Mammary epithelial cell (primary cell): ENCODE measurements at regions of chr5 and their contacts with region 1.

Region 1: GRCh38 chr5:82351754-82352145 is 73.6 kb upstream of the RPS23 start:
- DNase-seq: peak; percentile 69
- H3K4me3 ChIP-seq: no peak overlapping the region
- H3K27ac ChIP-seq: no peak overlapping the region
- H3K4me1 ChIP-seq: peaks cover 3% of the 10 kb centered on the region
- H3K27me3 ChIP-seq: no peaks in the 10 kb centered on the region
- CTCF ChIP-seq: peak; percentile 64 to 70

Region 2: DNA sequence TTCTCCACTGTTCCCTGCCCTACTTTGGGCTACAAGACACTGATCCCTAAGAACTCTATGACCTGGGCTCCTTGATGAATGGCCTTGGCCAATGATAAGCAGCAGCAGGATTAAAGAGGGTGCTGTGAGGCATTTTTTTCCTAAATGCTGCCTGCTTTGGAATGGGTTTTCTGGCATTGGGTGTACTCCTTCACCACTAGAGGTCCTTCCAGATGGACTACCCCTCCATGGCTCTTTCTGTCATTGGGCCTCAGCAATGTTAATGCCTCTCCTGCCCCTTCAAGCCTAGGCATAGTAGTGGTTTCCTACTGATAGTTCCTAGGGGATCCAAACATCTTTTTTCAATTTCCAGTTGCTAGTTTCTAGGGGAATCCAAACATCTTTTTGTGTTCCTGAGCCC is 245.7 kb after region 1 on chr5:
- CTCF ChIA-PET with region 1: no interaction called
- dilution Hi-C with region 1: no loop called
- in situ Hi-C with region 1: no loop called
- intact Hi-C with region 1: no loop called
- DNase-seq: no peak
- H3K4me3 ChIP-seq: no peak overlapping the region
- H3K27ac ChIP-seq: no peak overlapping the region
- H3K4me1 ChIP-seq: no peaks in the 10 kb centered on the region
- H3K27me3 ChIP-seq: no peaks in the 10 kb centered on the region
- CTCF ChIP-seq: peak; percentile 18 to 37

Region 3: DNA sequence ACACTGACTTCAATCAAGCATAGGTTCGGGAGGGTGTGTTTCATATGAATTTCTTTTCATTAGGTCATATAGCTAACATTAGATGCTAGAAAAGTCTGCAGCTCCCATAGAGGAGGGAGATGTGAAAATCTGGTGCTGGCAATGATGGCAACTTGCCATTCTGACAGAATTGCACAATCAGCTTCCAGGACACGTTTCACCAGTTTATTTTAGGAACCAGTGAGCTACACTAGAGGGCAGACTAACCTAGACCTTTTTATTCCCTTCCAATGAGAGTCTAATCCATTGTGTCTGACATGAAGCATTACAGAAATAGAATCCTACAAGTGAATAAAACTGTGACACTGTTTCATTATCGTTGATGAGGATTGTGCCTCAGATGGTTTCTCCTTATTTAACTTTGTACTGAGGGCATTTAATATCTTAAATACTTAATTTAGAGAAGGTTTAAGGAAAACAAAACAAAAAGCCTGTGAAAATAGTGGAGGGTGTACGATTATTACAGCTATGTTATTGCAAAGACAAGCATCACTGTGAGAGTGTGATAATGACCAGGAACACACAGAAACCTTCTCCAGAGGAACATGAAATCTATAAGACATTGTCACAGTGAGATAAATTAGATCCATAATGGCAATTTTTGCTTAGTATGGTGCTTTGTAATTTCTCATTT is 289.7 kb after region 1 on chr5:
- CTCF ChIA-PET with region 1: no interaction called
- dilution Hi-C with region 1: no loop called
- in situ Hi-C with region 1: loop called (anchors 10 to 25 kb)
- intact Hi-C with region 1: loop called (anchors 1 kb)
- DNase-seq: peak; percentile 76
- H3K4me3 ChIP-seq: no peak overlapping the region
- H3K27ac ChIP-seq: no peak overlapping the region
- H3K4me1 ChIP-seq: peaks cover under 1% of the 10 kb centered on the region
- H3K27me3 ChIP-seq: no peaks in the 10 kb centered on the region
- CTCF ChIP-seq: peak; percentile 65 to 78

Region 4: GRCh38 chr5:83076742-83077661 is 725.3 kb after region 1 on chr5 and contains the starts of genes TMEM167A and XRCC4:
- CTCF ChIA-PET with region 1: no interaction called
- dilution Hi-C with region 1: no loop called
- in situ Hi-C with region 1: no loop called
- intact Hi-C with region 1: loop called (anchors 10 kb)
- DNase-seq: peak; percentile 98
- H3K4me3 ChIP-seq: peak within 1 kb of the TSS; percentile 75 to 91 (median 86)
- H3K27ac ChIP-seq: peak within 1 kb of the TSS; percentile 87
- H3K4me1 ChIP-seq: peaks cover 8% of the 10 kb centered on the region
- H3K27me3 ChIP-seq: no peaks in the 10 kb centered on the region
- CTCF ChIP-seq: no peak
- total RNA-seq, gene TMEM167A: 49.8 to 88.5 TPM
- total RNA-seq, gene XRCC4: 6.3 to 8.3 TPM

Region 5: GRCh38 chr5:83467371-83468035 is 1115.8 kb after region 1 on chr5:
- CTCF ChIA-PET with region 1: no interaction called
- dilution Hi-C with region 1: no loop called
- in situ Hi-C with region 1: loop called in 1 of 2 experiments (anchors 25 kb)
- intact Hi-C with region 1: loop called (anchors 1 kb)
- DNase-seq: no peak
- H3K4me3 ChIP-seq: no peak overlapping the region
- H3K27ac ChIP-seq: no peak overlapping the region
- H3K4me1 ChIP-seq: peaks cover 6% of the 10 kb centered on the region
- H3K27me3 ChIP-seq: peaks cover 10% of the 10 kb centered on the region
- CTCF ChIP-seq: no peak

Region 6: DNA sequence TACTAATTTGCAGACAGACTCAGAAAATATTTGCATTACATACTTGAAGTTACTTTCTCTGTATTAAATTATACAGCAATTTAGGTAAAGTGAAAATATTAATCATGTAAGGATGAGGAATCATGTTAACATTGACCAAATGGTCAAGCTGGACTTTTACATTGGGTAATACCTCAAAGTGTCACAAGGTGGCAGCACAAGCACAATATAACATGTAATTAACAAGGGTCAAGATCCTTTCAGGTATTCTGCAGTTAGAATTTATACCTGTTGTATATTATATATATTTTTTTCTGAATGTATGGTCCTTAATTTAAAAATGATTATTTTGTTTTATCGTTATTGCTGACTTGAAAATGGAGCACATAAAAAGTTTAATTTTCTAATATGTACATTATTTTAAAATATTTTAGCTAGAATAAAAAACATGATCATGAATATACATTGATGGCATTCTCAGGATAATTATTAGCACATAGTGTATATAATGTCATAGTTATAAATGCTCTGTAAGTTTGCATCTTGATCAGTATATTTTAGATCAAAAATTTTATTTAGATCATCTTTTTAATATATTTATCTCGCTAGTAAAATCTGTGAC is 1360.4 kb after region 1 on chr5:
- CTCF ChIA-PET with region 1: no interaction called
- dilution Hi-C with region 1: no loop called
- in situ Hi-C with region 1: no loop called
- intact Hi-C with region 1: loop called (anchors 5 kb)
- DNase-seq: peak; percentile 33
- H3K4me3 ChIP-seq: no peak overlapping the region
- H3K27ac ChIP-seq: no peak overlapping the region
- H3K4me1 ChIP-seq: no peaks in the 10 kb centered on the region
- H3K27me3 ChIP-seq: peaks cover 2% of the 10 kb centered on the region
- CTCF ChIP-seq: peak; percentile 63 to 73